Endothelial cell of umbilical vein (primary cell): ENCODE measurements at regions of chr18 and their contacts with region 1.

Region 1: DNA sequence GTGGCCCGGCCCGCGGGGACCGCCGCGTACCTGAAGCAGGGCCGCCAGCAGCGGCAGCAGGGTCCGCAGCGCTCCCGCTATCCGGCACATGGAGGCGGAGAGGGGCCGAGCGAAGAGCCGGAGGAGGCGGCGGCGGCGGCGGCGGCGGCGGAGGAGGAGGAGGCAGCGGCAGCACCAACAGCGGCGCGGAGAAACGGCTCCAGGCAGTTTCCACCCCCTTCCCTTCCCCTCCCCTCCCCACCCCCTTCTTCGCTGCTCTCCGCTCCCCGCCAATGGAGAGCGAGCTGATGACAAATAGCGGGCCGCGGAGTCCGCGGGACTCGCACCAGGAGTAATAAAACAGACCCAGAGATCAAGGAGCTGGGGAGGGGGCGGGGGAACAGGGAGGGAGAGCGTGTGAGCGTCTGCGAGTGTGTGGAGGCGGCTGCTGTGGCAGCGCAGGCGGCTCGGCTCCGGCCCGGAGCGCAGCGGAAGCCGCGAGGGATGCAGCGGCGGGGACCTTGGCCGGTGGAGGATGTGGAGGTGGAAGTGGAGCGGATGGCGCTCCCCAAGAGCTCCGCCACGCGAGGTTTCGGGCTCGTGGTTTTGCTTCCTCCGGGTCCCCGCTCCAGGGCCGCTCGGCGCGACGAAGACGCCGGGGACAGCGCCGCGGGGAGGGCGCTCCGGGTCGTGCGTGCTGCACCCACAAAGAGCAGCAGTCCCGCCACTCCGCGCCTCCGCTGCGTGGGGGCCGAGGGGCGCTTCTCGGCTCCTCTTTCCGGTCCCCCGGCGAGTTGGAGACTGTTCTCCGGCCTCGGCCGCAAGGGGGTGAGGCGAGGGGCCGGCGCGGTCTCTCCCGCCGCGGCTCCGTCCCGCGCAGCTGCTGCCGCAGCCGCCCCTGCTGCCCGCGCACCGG is at the start of gene CDH2:
- DNase-seq: peak; percentile 79
- H3K4me3 ChIP-seq: peak within 1 kb of the TSS; percentile 60 to 99 (median 98)
- H3K27ac ChIP-seq: peak within 1 kb of the TSS; percentile 79
- H3K4me1 ChIP-seq: peaks cover 21% of the 10 kb centered on the region
- H3K27me3 ChIP-seq: no peaks in the 10 kb centered on the region
- CTCF ChIP-seq: peak; percentile 20 to 42
- POLR2A ChIP-seq: peak; percentile 64
- total RNA-seq, gene CDH2: 59.5 and 84.2 TPM in 2 replicates

Region 2: DNA sequence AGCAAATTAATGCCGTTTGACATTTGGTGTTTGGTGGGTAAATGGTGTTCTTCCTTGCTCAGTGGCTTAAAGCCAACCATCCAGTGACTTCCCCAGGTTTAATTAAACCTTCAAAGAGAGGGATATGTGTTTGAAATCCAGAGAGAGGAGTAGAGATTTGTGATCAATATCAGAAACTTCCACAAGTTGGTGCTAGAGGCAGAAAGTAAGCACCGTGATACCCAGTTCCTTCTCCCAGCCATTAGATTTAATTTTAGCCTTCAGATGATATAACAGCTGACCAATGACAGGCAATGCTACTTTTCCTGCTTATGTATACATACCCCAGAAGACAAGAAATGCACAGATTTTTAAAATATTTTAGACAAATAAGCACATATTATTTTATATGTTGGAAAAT is 398.7 kb before region 1 on chr18:
- CTCF ChIA-PET with region 1: interaction called, 9 read pairs
- POLR2A ChIA-PET with region 1: no interaction called
- dilution Hi-C with region 1: no loop called
- intact Hi-C with region 1: loop called (anchors 5 kb)
- DNase-seq: peak; percentile 32
- H3K4me3 ChIP-seq: no peak overlapping the region
- H3K27ac ChIP-seq: no peak overlapping the region
- H3K4me1 ChIP-seq: no peaks in the 10 kb centered on the region
- H3K27me3 ChIP-seq: peaks cover 1 to 8% of the 10 kb centered on the region in 2 experiments
- CTCF ChIP-seq: peak; percentile 11 to 42
- POLR2A ChIP-seq: no peak

Region 3: GRCh38 chr18:28013066-28013465 is 164.1 kb before region 1 on chr18:
- CTCF ChIA-PET with region 1: interaction called, 13 read pairs
- POLR2A ChIA-PET with region 1: no interaction called
- dilution Hi-C with region 1: no loop called
- intact Hi-C with region 1: loop called (anchors 1 kb)
- DNase-seq: peak; percentile 16
- H3K4me3 ChIP-seq: no peak overlapping the region
- H3K27ac ChIP-seq: no peak overlapping the region
- H3K4me1 ChIP-seq: no peaks in the 10 kb centered on the region
- H3K27me3 ChIP-seq: no peaks in the 10 kb centered on the region
- CTCF ChIP-seq: peak in 1 of 2 donors; percentile 14
- POLR2A ChIP-seq: no peak

Region 4: GRCh38 chr18:28030458-28030857 is 146.7 kb before region 1 on chr18:
- CTCF ChIA-PET with region 1: no interaction called
- POLR2A ChIA-PET with region 1: no interaction called
- dilution Hi-C with region 1: no loop called
- intact Hi-C with region 1: no loop called
- DNase-seq: no peak
- H3K4me3 ChIP-seq: no peak overlapping the region
- H3K27ac ChIP-seq: no peak overlapping the region
- H3K4me1 ChIP-seq: peaks cover 4% of the 10 kb centered on the region
- H3K27me3 ChIP-seq: no peaks in the 10 kb centered on the region
- CTCF ChIP-seq: no peak
- POLR2A ChIP-seq: no peak

Region 5: DNA sequence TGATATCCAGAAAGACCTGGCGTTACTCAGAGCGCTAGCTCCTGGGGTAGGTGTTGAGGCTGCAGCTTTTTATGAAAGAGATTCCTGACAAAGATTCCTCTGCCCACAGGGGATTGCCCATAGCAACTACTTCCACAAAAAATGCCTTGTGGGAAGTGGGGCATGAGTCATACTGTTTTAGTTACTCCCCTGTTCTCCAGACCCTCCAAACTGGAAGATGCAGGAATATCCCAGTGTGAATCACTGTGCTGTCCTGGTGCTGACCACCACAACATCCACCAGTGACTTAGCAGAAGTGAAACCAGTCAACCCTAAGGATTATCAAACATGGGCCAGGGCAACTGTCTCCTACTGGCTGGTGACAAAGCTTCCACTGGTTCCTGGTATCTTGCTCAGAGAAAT is 62.0 kb before region 1 on chr18:
- CTCF ChIA-PET with region 1: interaction called, 4 read pairs
- POLR2A ChIA-PET with region 1: no interaction called
- dilution Hi-C with region 1: no loop called
- intact Hi-C with region 1: loop called (anchors 2 kb)
- DNase-seq: peak; percentile 66
- H3K4me3 ChIP-seq: no peak overlapping the region
- H3K27ac ChIP-seq: peak overlapping the region; percentile 79
- H3K4me1 ChIP-seq: peaks cover 49% of the 10 kb centered on the region
- H3K27me3 ChIP-seq: no peaks in the 10 kb centered on the region
- CTCF ChIP-seq: no peak
- POLR2A ChIP-seq: no peak

Region 6: DNA sequence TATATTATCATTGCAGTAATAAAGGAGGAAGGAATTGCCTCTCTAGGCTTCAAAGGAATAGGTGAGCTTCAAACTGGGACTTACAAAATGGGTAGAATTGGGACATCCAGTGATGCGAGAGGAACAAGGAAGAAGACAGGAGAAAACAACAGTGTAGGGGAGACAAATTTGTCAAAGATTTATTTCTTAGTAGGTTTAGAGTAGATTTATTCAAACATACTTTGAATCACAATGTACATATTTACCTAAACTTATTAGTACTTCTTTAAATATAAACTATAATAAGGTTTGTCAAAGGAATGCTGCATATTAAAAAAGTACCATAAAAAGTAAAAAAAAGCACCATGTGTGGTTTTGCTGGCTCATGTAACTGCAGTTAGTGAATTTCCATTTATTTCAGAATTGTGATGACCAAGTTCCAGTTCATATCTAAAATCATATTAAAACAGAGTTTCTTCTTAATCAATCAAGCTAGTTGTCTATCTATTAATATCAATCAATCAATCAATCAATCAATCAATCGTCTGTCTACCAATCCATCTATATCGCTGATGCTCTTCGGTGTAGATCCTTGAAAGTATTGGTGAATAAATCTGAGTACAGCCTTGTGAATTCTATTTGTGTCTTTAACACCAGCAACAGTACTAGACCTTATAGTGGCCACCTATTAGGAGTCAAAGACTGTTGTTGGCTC is 161.3 kb after region 1 on chr18:
- CTCF ChIA-PET with region 1: no interaction called
- POLR2A ChIA-PET with region 1: no interaction called
- dilution Hi-C with region 1: no loop called
- intact Hi-C with region 1: no loop called
- DNase-seq: no peak
- H3K4me3 ChIP-seq: no peak overlapping the region
- H3K27ac ChIP-seq: no peak overlapping the region
- H3K4me1 ChIP-seq: no peaks in the 10 kb centered on the region
- H3K27me3 ChIP-seq: no peaks in the 10 kb centered on the region
- CTCF ChIP-seq: no peak
- POLR2A ChIP-seq: no peak

Region 7: GRCh38 chr18:29154758-29155725 is 977.9 kb after region 1 on chr18:
- CTCF ChIA-PET with region 1: no interaction called
- POLR2A ChIA-PET with region 1: no interaction called
- dilution Hi-C with region 1: no loop called
- intact Hi-C with region 1: loop called (anchors 5 kb)
- DNase-seq: peak; percentile 86
- H3K4me3 ChIP-seq: peak overlapping the region in 1 of 3 experiments; percentile 51
- H3K27ac ChIP-seq: peak overlapping the region; percentile 96
- H3K4me1 ChIP-seq: peaks cover 54% of the 10 kb centered on the region
- H3K27me3 ChIP-seq: no peaks in the 10 kb centered on the region
- CTCF ChIP-seq: no peak
- POLR2A ChIP-seq: peak; percentile 45